Heart left ventricle (tissue), 16 donors: ENCODE measurements at regions of chr2 and their contacts with region 1.

Region 1: GRCh38 chr2:96913398-96914202 is 43.7 kb upstream of the SEMA4C start:
- DNase-seq: peak in 3 of 5 donors; percentile 50 to 67 (median 53)
- ATAC-seq: peak; percentile 11 to 64 (median 33)
- H3K4me3 ChIP-seq: peak overlapping the region in 1 of 12 donors; percentile 5
- H3K27ac ChIP-seq: peak overlapping the region; percentile 22 to 83 (median 70)
- H3K4me1 ChIP-seq: peaks cover 3 to 63% (median 52%) of the 10 kb centered on the region in 12 donors
- H3K27me3 ChIP-seq: no peaks in the 10 kb centered on the region
- CTCF ChIP-seq: no peak
- POLR2A ChIP-seq: no peak

Region 2: DNA sequence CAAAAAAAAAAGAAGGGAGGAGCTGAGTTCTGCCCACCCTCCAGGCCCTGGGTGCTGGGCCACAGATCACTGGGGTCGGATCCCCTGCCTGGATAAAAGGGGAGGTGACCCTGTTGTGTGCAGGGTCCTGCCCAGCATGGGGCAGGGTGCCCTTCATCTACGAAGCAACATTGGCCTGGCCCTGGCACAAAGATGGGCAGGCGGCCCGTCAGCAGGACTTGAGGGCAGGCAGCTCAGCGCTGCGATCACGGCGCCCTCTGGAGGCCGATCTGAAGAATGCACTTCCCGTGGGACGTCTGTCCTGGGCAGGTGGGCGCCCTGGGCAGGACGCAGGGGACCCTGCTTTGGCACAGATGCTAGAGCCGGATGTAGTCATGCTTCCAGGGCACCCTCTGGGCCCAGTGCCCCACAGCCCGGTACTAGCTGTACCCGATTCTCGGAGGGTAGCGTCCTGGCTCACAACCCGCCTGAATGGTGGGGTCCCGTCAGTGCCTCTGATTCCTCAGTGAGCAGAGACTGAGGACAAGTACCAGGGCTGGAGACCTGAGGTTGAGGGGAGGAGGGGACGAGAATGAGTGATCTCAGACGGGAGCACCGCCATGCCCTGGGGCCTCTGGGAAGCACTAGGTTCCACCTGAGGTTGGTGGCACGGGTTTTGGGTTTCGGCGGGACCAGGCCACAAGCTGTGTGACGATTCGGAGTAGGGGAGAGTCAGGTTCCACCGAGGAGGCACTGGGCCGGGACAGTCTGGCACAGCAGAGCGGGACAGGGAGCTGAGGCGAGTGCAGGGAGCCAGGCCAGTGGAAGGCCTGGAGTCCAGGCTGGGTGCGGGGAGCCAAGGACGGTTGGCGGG is 359.1 kb before region 1 on chr2:
- intact Hi-C with region 1: no loop called
- DNase-seq: peak; percentile 72 to 87 (median 76)
- ATAC-seq: peak; percentile 59 to 74 (median 72)
- H3K4me3 ChIP-seq: peak overlapping the region in 4 of 12 donors; percentile 10 to 35 (median 26)
- H3K27ac ChIP-seq: peak overlapping the region in 1 of 12 donors; percentile 38
- H3K4me1 ChIP-seq: peaks cover 0 to 15% (median 9%) of the 10 kb centered on the region in 12 donors
- H3K27me3 ChIP-seq: no peaks in the 10 kb centered on the region
- CTCF ChIP-seq: peak; percentile 91 to 100 (median 96)
- POLR2A ChIP-seq: no peak

Region 3: DNA sequence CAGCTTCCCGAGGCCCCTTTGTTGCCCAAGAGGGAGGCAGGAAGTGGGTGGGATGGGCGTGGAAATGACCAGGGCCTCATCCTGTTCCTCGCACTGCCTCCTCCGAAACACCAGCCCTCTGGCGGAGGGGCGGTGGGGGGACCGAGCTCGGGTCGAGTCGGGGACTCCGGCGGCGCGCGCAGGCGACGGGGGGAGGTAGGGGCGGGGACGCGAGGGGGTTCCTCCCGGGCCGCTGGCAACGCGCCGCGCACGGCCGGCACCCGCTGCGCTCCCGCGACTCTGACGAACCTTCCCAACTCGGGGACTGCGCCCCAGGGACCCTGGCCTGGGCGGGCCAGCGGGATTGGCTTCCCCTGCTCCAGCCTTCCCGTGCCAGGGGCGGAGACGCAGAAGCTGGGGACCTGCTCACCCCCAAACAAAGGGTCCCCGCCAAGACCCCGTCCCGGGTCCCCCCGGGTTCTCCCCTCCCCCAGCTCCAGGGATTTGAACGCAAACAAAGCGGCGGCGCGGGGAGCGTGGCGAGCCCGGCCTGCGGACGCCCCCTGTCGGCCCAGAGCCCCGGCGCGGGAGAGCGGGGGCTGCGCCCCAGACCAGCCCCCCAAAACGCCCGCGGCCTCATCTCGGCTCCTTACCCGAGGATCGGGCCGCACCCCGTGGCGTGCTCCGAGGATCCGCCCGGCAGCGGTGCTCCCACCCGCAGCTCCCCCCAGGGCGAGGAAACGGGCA is 44.9 kb before region 1 on chr2:
- intact Hi-C with region 1: loop called in 4 of 10 experiments (anchors 2 to 5 kb)
- DNase-seq: peak; percentile 90 to 95 (median 93)
- ATAC-seq: peak; percentile 68 to 74 (median 72)
- H3K4me3 ChIP-seq: peak overlapping the region; percentile 79 to 100 (median 98)
- H3K27ac ChIP-seq: peak overlapping the region; percentile 96 to 100 (median 98)
- H3K4me1 ChIP-seq: peaks cover 3 to 80% (median 51%) of the 10 kb centered on the region in 12 donors
- H3K27me3 ChIP-seq: peaks cover 0 to 27% (median 0%) of the 10 kb centered on the region in 9 donors
- CTCF ChIP-seq: peak; percentile 30 to 82 (median 64)
- POLR2A ChIP-seq: peak in 1 of 2 donors; percentile 40